ENCODE measurements at regions of chr4 and their contacts with region 1.

Region 1: GRCh38 chr4:183074296-183074990 is 24.6 kb upstream of the WWC2 start:
- DNase-seq: peak; percentile 6
- H3K4me3 ChIP-seq: no peak overlapping the region
- H3K27ac ChIP-seq: no peak overlapping the region
- H3K27me3 ChIP-seq: no peaks in the 10 kb centered on the region
- CTCF ChIP-seq: no peak

Region 2: DNA sequence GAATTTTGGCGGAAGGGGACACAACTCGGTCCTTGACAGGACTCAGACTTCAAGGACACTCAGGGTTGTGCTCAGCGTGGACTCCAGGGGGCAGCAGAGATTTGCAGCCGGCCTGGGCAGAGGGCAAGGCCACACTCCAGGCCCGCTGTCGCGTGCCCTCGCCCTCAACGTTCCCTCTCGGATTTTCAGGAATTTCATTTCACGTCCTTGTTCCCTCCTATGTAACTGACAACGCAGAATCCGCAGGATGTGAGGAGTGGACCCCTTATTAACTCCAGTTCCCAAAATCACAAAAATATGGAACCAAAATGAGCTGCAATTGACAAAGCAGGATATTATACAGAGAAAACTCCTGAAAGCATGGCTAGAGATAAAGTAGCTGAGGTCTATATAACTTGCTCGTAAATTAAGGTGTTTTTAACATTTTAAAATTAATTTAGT is 136.2 kb before region 1 on chr4:
- CTCF ChIA-PET with region 1: interaction called, 33 read pairs
- POLR2A ChIA-PET with region 1: no interaction called
- DNase-seq: no peak
- H3K4me3 ChIP-seq: no peak overlapping the region
- H3K27ac ChIP-seq: no peak overlapping the region
- H3K27me3 ChIP-seq: peaks cover 11% of the 10 kb centered on the region
- CTCF ChIP-seq: peak; percentile 95

Region 3: GRCh38 chr4:183098723-183099536 is 24.5 kb after region 1 on chr4 and contains the start of gene WWC2:
- CTCF ChIA-PET with region 1: interaction called, 16 read pairs
- POLR2A ChIA-PET with region 1: no interaction called
- DNase-seq: peak; percentile 79
- H3K4me3 ChIP-seq: peak within 1 kb of the TSS; percentile 91
- H3K27ac ChIP-seq: peak within 1 kb of the TSS; percentile 98
- H3K27me3 ChIP-seq: no peaks in the 10 kb centered on the region
- CTCF ChIP-seq: no peak
- polyA plus RNA-seq, gene WWC2: 36.3 and 43.6 TPM in 2 replicates

Region 4: GRCh38 chr4:183241322-183241640 is 166.8 kb after region 1 on chr4:
- CTCF ChIA-PET with region 1: interaction called, 26 read pairs
- POLR2A ChIA-PET with region 1: no interaction called
- DNase-seq: peak; percentile 54
- H3K4me3 ChIP-seq: no peak overlapping the region
- H3K27ac ChIP-seq: no peak overlapping the region
- H3K27me3 ChIP-seq: no peaks in the 10 kb centered on the region
- CTCF ChIP-seq: no peak

Region 5: DNA sequence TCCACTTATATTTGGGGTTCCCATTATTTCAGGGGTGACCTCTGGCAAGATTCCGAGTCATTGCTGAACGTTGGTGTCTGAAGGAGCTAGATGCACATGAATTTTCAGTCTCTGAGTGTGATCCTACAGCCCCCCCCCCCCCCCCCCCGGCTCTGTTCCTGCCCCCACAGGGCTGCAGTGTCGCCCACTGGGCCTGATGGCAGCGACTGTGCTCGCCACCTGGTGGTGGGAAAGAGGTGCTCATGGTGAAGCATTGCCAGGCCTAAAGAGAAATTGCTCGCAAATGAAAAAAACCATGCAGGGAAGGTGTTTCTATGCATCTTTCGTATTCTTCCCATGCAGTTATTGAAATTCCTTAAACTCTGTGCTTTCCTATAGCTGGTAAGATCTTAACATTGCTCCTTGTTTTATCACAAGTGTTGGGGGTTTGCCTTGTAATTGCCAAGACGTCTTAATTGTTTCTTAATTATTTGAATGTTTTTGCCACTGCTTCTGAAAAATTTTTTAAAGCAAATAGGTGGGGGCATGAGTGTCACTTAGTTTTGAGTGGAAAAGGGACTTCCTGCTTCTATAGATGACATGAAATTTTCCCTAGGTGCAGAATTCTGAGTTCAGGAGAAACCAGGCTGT is 182.4 kb after region 1 on chr4:
- CTCF ChIA-PET with region 1: interaction called, 171 read pairs
- POLR2A ChIA-PET with region 1: no interaction called
- DNase-seq: no peak
- H3K4me3 ChIP-seq: no peak overlapping the region
- H3K27ac ChIP-seq: no peak overlapping the region
- H3K27me3 ChIP-seq: no peaks in the 10 kb centered on the region
- CTCF ChIP-seq: peak; percentile 81